SK-N-SH (cell line): ENCODE measurements at regions of chrX and their contacts with region 1.

Region 1: DNA sequence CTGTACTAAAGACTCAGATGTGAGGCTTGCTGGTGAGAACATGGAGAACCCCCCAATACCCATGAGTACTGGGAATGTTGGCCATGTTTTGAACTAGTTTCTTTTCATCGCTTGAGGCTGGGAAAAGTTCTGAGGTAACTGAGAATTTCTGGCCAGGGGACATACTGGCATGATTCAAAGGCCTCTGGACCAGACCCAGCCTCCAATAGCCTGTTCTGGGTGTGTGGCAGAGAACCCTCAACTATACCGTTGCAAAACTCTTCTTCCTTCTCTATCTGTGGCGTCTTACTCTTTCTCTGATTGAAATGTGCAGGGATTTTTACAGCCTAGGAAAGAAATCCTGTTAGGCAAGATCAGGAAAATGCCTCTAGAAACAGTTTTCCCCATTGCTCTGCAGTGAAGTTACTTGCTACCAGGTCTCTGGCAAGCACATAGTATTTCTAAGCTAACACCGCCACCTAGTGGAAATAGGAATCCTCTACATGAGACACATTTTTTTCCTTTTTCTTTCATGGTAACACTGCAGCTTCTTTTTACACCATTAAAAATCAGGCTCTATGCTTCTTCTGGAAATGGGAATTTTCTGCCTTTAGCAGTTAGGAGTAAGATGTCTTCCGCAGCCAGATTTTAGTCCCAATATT is 170.7 kb upstream of the ZCCHC13 start:
- DNase-seq: peak; percentile 63
- H3K4me3 ChIP-seq: no peak overlapping the region
- H3K27ac ChIP-seq: no peak overlapping the region
- H3K4me1 ChIP-seq: no peaks in the 10 kb centered on the region
- H3K27me3 ChIP-seq: no peaks in the 10 kb centered on the region
- CTCF ChIP-seq: peak; percentile 83
- EP300 ChIP-seq: no peak
- RAD21 ChIP-seq: peak; percentile 90

Region 2: DNA sequence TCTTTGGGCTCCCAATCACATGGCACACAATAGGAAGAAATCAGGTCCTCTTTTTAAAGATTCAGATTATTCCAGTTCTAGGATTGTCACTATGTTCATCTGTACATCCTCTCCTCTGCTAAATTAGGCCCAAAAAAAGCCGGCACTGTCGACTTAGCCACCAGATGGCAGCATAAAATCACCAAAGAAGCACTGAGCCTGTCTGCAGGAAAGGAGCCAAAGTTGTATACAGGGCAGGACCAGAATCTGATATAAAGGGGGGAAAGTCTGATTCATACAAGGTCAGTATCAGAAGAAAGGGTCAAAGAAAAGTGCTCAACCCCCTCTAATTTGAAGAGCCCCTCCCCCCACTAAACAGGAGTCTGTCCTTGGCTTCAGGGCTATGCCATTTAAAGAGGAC is 277.7 kb before region 1 on chrX:
- CTCF ChIA-PET with region 1: interaction called, 13 read pairs
- POLR2A ChIA-PET with region 1: no interaction called
- DNase-seq: peak; percentile 57
- H3K4me3 ChIP-seq: no peak overlapping the region
- H3K27ac ChIP-seq: no peak overlapping the region
- H3K4me1 ChIP-seq: no peaks in the 10 kb centered on the region
- H3K27me3 ChIP-seq: no peaks in the 10 kb centered on the region
- CTCF ChIP-seq: peak; percentile 96
- EP300 ChIP-seq: no peak
- RAD21 ChIP-seq: peak; percentile 96

Region 3: GRCh38 chrX:74061879-74062278 is 71.4 kb before region 1 on chrX:
- CTCF ChIA-PET with region 1: no interaction called
- POLR2A ChIA-PET with region 1: no interaction called
- DNase-seq: no peak
- H3K4me3 ChIP-seq: no peak overlapping the region
- H3K27ac ChIP-seq: no peak overlapping the region
- H3K4me1 ChIP-seq: no peaks in the 10 kb centered on the region
- H3K27me3 ChIP-seq: no peaks in the 10 kb centered on the region
- CTCF ChIP-seq: no peak
- EP300 ChIP-seq: no peak
- RAD21 ChIP-seq: no peak

Region 4: GRCh38 chrX:74119016-74119910 is 14.0 kb before region 1 on chrX:
- CTCF ChIA-PET with region 1: interaction called, 24 read pairs
- POLR2A ChIA-PET with region 1: no interaction called
- DNase-seq: no peak
- H3K4me3 ChIP-seq: 0 out of 4 replicates have a peak overlapping the region, but pooled peaks of 1 of the 2 experiments have one; percentile 17
- H3K27ac ChIP-seq: 0 out of 4 replicates have a peak overlapping the region, but pooled peaks of 1 of the 2 experiments have one; percentile 19
- H3K4me1 ChIP-seq: no peaks in the 10 kb centered on the region; a peak in 1 of 4 replicates
- H3K27me3 ChIP-seq: no peaks in the 10 kb centered on the region
- CTCF ChIP-seq: no peak
- EP300 ChIP-seq: no peak
- RAD21 ChIP-seq: no peak

Region 5: GRCh38 chrX:74160358-74160757 is 27.1 kb after region 1 on chrX:
- CTCF ChIA-PET with region 1: interaction called, 10 read pairs
- POLR2A ChIA-PET with region 1: no interaction called
- DNase-seq: no peak
- H3K4me3 ChIP-seq: no peak overlapping the region
- H3K27ac ChIP-seq: no peak overlapping the region
- H3K4me1 ChIP-seq: no peaks in the 10 kb centered on the region; a peak in 1 of 4 replicates
- H3K27me3 ChIP-seq: no peaks in the 10 kb centered on the region
- CTCF ChIP-seq: no peak
- EP300 ChIP-seq: no peak
- RAD21 ChIP-seq: no peak

Region 6: GRCh38 chrX:74343343-74344279 is 210.3 kb after region 1 on chrX:
- CTCF ChIA-PET with region 1: interaction called, 11 read pairs
- POLR2A ChIA-PET with region 1: no interaction called
- DNase-seq: peak; percentile 57
- H3K4me3 ChIP-seq: no peak overlapping the region
- H3K27ac ChIP-seq: no peak overlapping the region
- H3K4me1 ChIP-seq: no peaks in the 10 kb centered on the region
- H3K27me3 ChIP-seq: no peaks in the 10 kb centered on the region; the same call in 1 of the 2 replicates
- CTCF ChIP-seq: peak; percentile 76
- EP300 ChIP-seq: no peak
- RAD21 ChIP-seq: peak; percentile 84